CD4-positive, alpha-beta memory T cell (primary cell): ENCODE measurements at regions of chr2 and their contacts with region 1.

Region 1: DNA sequence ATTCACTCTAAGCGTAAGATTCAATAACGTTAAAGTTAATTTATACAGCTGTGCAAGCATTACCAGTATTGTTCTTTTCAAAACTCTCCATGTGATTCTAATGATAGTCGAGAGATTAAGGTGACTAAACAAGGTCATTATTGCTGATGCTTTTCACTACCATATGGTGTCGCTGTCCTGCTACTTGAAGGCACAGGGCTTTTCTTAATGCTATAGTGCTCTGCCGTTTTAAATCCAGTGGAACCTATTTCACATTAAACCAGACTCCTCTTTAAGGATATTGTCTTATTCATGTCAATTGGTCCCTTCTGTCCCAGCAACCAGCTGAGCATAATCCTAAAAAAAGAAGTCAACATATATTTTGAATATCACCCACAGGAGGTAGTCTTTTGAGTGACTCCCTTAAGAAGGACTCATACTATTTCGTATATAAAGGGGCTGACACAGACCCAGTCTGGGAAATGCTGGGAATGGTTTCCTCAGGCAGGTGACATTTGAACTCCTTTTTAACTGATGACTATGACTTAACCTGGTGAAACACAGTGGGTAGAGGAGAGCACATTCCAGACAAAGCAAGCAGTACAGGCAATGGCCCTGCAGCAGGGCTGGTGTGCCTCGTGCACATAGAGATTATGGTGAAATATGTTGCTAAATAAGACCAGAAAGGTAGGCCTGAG is 53.9 kb upstream of the CYTIP start:
- DNase-seq: peak; percentile 35 to 52 (median 40)
- H3K4me3 ChIP-seq: no peak overlapping the region
- H3K4me3 Mint-ChIP-seq: no peak overlapping the region
- H3K27ac ChIP-seq: no peak overlapping the region
- H3K27ac Mint-ChIP-seq: no peak overlapping the region
- H3K4me1 ChIP-seq: peaks cover under 1% of the 10 kb centered on the region
- H3K4me1 Mint-ChIP-seq: peaks cover 6 to 13% (median 11%) of the 10 kb centered on the region in 4 donors
- H3K27me3 ChIP-seq: no peaks in the 10 kb centered on the region
- H3K27me3 Mint-ChIP-seq: peaks cover 0 to 3% of the 10 kb centered on the region in 2 donors

Region 2: DNA sequence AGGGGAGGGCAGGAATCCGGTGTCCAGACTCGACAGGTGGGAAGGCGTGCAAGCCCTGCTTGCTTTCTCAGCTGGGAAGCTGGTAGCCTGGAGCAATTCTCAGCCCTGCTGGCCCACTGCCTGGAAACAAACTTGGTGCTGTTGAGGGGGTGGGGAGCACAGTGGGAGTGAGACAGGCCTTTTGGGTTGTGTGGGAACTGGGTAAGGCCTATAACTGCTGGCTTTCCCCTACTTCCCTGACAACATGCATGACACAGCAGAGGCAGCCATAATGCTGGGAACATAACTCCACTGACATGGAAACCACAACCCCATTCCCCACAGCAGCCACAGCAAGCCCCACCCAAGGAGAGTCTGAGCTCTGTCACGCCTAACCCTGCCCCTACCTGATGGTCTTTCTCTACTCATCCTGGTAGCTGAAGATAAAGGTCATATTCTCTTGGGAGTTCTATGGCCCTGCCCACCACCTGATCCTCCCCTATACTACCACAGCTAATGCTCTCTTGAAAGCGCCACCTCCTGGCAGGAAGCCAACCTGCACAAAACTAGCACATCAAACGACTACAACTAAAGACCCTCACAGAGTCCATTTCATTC is 253.8 kb after region 1 on chr2:
- CTCF ChIA-PET with region 1: interaction called, 5 read pairs
- POLR2A ChIA-PET with region 1: no interaction called
- intact Hi-C with region 1: loop called (anchors 5 kb)
- DNase-seq: peak in 1 of 5 donors; percentile 41
- H3K4me3 ChIP-seq: no peak overlapping the region
- H3K4me3 Mint-ChIP-seq: no peak overlapping the region
- H3K27ac ChIP-seq: no peak overlapping the region
- H3K27ac Mint-ChIP-seq: peak overlapping the region in 2 of 7 donors; percentile 13 to 26
- H3K4me1 ChIP-seq: no peaks in the 10 kb centered on the region
- H3K4me1 Mint-ChIP-seq: peaks cover 3 to 29% (median 19%) of the 10 kb centered on the region in 4 donors
- H3K27me3 ChIP-seq: no peaks in the 10 kb centered on the region
- H3K27me3 Mint-ChIP-seq: no peaks in the 10 kb centered on the region

Region 3: GRCh38 chr2:158013891-158014290 is 516.1 kb after region 1 on chr2:
- CTCF ChIA-PET with region 1: interaction called, 19 read pairs
- POLR2A ChIA-PET with region 1: no interaction called
- intact Hi-C with region 1: loop called (anchors 1 kb)
- DNase-seq: no peak
- H3K4me3 ChIP-seq: no peak overlapping the region
- H3K4me3 Mint-ChIP-seq: no peak overlapping the region
- H3K27ac ChIP-seq: no peak overlapping the region
- H3K27ac Mint-ChIP-seq: no peak overlapping the region
- H3K4me1 ChIP-seq: peaks cover 6% of the 10 kb centered on the region
- H3K4me1 Mint-ChIP-seq: peaks cover 0 to 14% (median 10%) of the 10 kb centered on the region in 4 donors
- H3K27me3 ChIP-seq: no peaks in the 10 kb centered on the region
- H3K27me3 Mint-ChIP-seq: peaks cover 1% of the 10 kb centered on the region in 2 donors